ENCODE measurements at regions of chrX and their contacts with region 1.

Region 1: GRCh38 chrX:14029425-14030173 is at the start of gene GEMIN8:
- DNase-seq: peak; percentile 90
- H3K4me3 Mint-ChIP-seq: peak within 1 kb of the TSS; percentile 94
- H3K27ac Mint-ChIP-seq: peak within 1 kb of the TSS; percentile 94
- H3K4me1 Mint-ChIP-seq: peaks cover 25% of the 10 kb centered on the region
- H3K27me3 Mint-ChIP-seq: no peaks in the 10 kb centered on the region
- total RNA-seq, gene GEMIN8: 8.5 to 10.6 TPM

Region 2: DNA sequence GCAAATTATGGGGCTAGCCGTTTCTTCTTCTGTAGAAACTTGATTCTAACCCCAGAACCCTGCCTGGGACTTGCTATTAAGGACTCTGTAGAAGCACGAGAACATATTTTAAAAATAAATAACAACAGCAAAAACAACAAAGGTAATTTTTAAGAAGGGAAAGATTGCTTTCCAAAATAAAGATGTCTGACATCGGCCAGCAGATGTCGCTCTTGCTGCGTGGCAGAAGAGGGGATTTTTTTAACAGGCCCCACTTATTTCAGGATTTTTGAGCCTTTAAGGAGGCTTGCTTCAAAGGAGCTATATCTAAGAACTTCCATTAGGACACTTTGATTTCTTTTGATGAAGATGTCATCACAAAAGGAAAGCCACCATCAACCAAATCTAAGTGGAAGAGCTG is 523.0 kb before region 1 on chrX:
- CTCF ChIA-PET with region 1: interaction called, 40 read pairs
- POLR2A ChIA-PET with region 1: interaction called, 3 read pairs
- intact Hi-C with region 1: loop called (anchors 1 kb)
- DNase-seq: peak; percentile 57
- H3K4me3 Mint-ChIP-seq: no peak overlapping the region
- H3K27ac Mint-ChIP-seq: no peak overlapping the region
- H3K4me1 Mint-ChIP-seq: peaks cover 5% of the 10 kb centered on the region
- H3K27me3 Mint-ChIP-seq: no peaks in the 10 kb centered on the region

Region 3: GRCh38 chrX:13669246-13669737 is 360.3 kb before region 1 on chrX:
- CTCF ChIA-PET with region 1: no interaction called
- POLR2A ChIA-PET with region 1: no interaction called
- intact Hi-C with region 1: loop called (anchors 1 kb)
- DNase-seq: peak; percentile 76
- H3K4me3 Mint-ChIP-seq: peak overlapping the region; percentile 70
- H3K27ac Mint-ChIP-seq: peak overlapping the region; percentile 95
- H3K4me1 Mint-ChIP-seq: peaks cover 24% of the 10 kb centered on the region
- H3K27me3 Mint-ChIP-seq: no peaks in the 10 kb centered on the region

Region 4: GRCh38 chrX:13898083-13898482 is 131.5 kb before region 1 on chrX:
- CTCF ChIA-PET with region 1: interaction called, 7 read pairs
- POLR2A ChIA-PET with region 1: no interaction called
- intact Hi-C with region 1: loop called (anchors 1 kb)
- DNase-seq: peak; percentile 9
- H3K4me3 Mint-ChIP-seq: no peak overlapping the region
- H3K27ac Mint-ChIP-seq: no peak overlapping the region
- H3K4me1 Mint-ChIP-seq: no peaks in the 10 kb centered on the region
- H3K27me3 Mint-ChIP-seq: no peaks in the 10 kb centered on the region

Region 5: DNA sequence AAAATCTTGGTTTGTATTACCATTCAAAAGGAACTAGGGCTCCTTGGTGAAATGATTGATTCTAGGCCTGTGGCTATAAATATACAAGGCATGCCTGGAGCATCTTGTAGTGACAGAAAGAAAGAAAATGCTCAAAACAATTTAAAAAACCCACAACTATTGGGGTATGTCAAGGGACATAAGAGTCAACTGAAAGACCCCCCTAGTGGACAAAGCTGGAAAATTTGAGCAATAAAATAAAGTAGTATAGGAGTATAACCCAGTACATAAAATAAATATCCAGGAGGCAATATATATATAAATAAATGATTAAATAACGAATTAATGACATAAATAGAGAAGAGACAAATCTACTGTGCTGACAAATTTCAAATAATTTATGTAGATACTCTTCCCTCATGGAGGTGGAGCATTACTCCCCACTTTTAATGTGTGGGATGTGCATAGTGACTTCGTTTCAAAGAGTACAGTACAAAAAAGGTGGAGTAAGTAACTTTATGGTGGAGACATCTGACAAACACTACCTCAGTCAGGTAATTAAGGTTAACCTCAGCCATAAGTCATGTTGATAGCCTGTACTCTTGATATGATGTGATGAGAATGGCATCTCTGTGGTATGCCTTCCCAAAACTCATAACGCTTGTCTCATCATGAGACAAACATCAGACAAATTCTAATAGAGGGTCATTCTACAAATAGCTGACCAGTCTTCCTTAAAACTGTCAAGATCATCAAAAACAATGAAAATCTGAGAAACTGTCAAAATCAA is 314.8 kb after region 1 on chrX:
- CTCF ChIA-PET with region 1: no interaction called
- POLR2A ChIA-PET with region 1: no interaction called
- intact Hi-C with region 1: no loop called
- DNase-seq: no peak
- H3K4me3 Mint-ChIP-seq: no peak overlapping the region
- H3K27ac Mint-ChIP-seq: no peak overlapping the region
- H3K4me1 Mint-ChIP-seq: no peaks in the 10 kb centered on the region
- H3K27me3 Mint-ChIP-seq: no peaks in the 10 kb centered on the region

Region 6: GRCh38 chrX:14872851-14873675 is 843.5 kb after region 1 on chrX and contains the starts of genes FANCB and MOSPD2:
- CTCF ChIA-PET with region 1: no interaction called
- POLR2A ChIA-PET with region 1: interaction called, 3 read pairs
- intact Hi-C with region 1: loop called (anchors 10 kb)
- DNase-seq: peak; percentile 96
- H3K4me3 Mint-ChIP-seq: peak within 1 kb of the TSS; percentile 79
- H3K27ac Mint-ChIP-seq: peak within 1 kb of the TSS; percentile 80
- H3K4me1 Mint-ChIP-seq: peaks cover 15% of the 10 kb centered on the region
- H3K27me3 Mint-ChIP-seq: no peaks in the 10 kb centered on the region
- total RNA-seq, gene FANCB: 12.0 to 16.2 TPM
- total RNA-seq, gene MOSPD2: 12.6 to 13.7 TPM

Region 7: DNA sequence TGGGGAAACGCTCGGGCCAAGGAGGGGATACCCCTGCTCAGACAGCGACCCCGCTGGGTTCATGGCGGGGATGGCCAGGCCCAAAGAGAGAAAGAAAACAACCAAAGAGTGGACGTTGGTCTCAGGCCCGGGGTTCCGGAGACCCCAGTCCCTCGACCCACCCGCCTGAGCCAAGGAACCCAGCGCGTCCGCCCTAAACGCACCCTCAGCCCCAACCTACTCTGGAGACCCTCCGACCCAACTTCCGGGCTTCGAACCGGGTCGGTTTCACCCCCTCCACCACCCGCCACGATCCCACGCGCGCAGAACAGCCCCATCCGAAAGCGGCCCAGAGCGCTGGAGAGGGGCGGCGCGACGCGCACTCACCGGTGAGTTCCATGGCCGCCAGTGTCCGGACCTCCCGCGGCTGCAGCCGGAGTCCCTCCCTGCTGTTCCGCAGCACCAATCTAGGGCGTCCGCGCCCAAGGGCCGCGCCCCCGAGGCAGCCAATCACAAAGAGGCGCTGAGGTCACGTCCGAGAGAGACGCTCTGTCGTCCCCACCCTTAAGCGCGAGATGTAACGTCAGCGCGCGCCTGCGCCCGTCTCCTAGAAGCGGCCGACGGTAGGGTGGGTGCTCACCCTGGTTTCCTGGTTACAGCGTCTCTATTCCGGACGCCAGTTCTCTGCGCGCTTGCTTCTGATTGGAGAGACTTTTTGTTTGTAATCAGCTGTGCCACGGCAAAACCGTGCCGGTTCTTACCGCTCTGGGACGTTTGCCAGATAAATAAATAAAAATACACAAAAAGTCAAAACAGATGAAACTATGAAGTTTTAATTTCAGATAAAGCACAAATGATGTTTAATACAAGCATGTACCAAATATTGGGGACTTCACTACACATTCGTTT is 1305.8 kb after region 1 on chrX and contains the start of gene PIGA:
- CTCF ChIA-PET with region 1: no interaction called
- POLR2A ChIA-PET with region 1: no interaction called
- intact Hi-C with region 1: loop called (anchors 10 kb)
- DNase-seq: peak; percentile 94
- H3K4me3 Mint-ChIP-seq: peak within 1 kb of the TSS; percentile 90
- H3K27ac Mint-ChIP-seq: peak within 1 kb of the TSS; percentile 88
- H3K4me1 Mint-ChIP-seq: peaks cover 13% of the 10 kb centered on the region
- H3K27me3 Mint-ChIP-seq: peaks cover 2% of the 10 kb centered on the region
- total RNA-seq, gene PIGA: 31.1 to 36.7 TPM